GM12878 (cell line): ENCODE measurements at regions of chr4 and their contacts with region 1.

Region 1: GRCh38 chr4:132642016-132642817 is 506.9 kb upstream of the PCDH10 start:
- DNase-seq: peak; percentile 3
- ATAC-seq: peak; percentile 64
- H3K4me3 ChIP-seq: no peak overlapping the region
- H3K27ac ChIP-seq: no peak overlapping the region
- H3K4me1 ChIP-seq: no peaks in the 10 kb centered on the region
- H3K27me3 ChIP-seq: no peaks in the 10 kb centered on the region
- CTCF ChIP-seq: peak; percentile 68 to 75 (median 74)
- EP300 ChIP-seq: no peak
- POLR2A ChIP-seq: no peak
- RAD21 ChIP-seq: peak; percentile 93

Region 2: GRCh38 chr4:130747842-130748241 is 1894.4 kb before region 1 on chr4:
- CTCF ChIA-PET with region 1: no interaction called
- POLR2A ChIA-PET with region 1: no interaction called
- RAD21 ChIA-PET with region 1: no interaction called
- SMC1A ChIA-PET with region 1: no interaction called
- in situ Hi-C with region 1: no loop called
- intact Hi-C with region 1: loop called (anchors 5 kb)
- DNase-seq: no peak
- ATAC-seq: 0 out of 3 replicates have a peak, but pooled peaks have one; percentile 34
- H3K4me3 ChIP-seq: no peak overlapping the region
- H3K27ac ChIP-seq: no peak overlapping the region
- H3K4me1 ChIP-seq: no peaks in the 10 kb centered on the region
- H3K27me3 ChIP-seq: no peaks in the 10 kb centered on the region
- CTCF ChIP-seq: no peak; a peak in 1 of 6 replicates
- EP300 ChIP-seq: no peak
- POLR2A ChIP-seq: no peak
- RAD21 ChIP-seq: peak; percentile 25; the same call in 1 of the 2 replicates